Activated naive CD4-positive, alpha-beta T cell treated with anti-CD3 and anti-CD28 coated beads for 36 hours (primary cell): ENCODE measurements at regions of chr16 and their contacts with region 1.

Region 1: DNA sequence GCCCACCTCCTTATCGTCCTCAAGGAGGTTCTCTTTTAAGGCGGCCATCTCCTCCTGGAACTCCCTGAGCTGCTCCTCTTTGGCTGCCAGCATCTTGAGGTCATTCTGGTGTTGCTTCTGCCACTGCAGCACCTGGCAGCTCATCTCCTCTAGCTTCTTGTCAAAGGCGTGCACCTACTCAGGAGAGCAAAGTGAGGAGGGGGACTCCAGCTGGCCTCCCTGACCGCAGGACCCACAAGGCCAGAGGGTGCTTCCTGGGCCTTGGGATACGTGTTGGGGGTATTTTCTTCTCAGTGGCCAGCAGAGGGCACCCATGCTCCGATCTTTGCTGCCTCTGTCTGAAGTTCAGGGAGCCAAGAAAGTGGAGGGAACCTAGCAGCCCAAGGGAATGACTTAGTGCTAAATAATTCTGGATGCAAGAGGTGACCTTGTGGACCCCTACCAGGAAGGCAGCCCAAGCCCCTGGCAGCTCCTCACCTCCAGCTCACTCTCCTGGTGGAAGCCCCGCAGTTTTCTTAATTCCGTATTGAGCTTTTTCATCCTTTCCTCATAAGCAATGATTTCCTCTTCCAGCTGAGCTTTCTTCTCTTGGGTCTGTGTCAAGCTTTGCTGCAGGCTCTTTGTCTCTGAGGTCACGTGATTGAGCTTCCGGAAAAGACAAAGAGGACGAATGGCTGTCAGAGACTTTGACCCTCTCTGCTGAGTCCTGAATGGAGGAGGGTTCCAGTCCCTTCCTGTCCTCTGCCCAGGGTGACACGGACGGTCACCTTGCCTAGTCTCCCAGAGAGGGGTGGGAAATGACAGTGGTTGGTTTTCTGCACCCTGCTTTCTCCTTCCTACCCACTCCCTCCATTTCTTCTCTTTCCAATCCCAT is 31.4 kb downstream of the DHX38 start:
- DNase-seq: peak; percentile 80
- H3K4me3 Mint-ChIP-seq: no peak overlapping the region
- H3K27ac Mint-ChIP-seq: no peak overlapping the region
- H3K4me1 Mint-ChIP-seq: no peaks in the 10 kb centered on the region
- H3K27me3 Mint-ChIP-seq: no peaks in the 10 kb centered on the region

Region 2: GRCh38 chr16:72112906-72113615 is 11.9 kb before region 1 on chr16:
- CTCF ChIA-PET with region 1: interaction called, 10 read pairs
- intact Hi-C with region 1: no loop called
- DNase-seq: no peak
- H3K4me3 Mint-ChIP-seq: no peak overlapping the region
- H3K27ac Mint-ChIP-seq: no peak overlapping the region
- H3K4me1 Mint-ChIP-seq: no peaks in the 10 kb centered on the region
- H3K27me3 Mint-ChIP-seq: no peaks in the 10 kb centered on the region

Region 3: GRCh38 chr16:72400257-72400882 is 275.4 kb after region 1 on chr16:
- CTCF ChIA-PET with region 1: no interaction called
- intact Hi-C with region 1: loop called (anchors 10 kb)
- DNase-seq: peak; percentile 41
- H3K4me3 Mint-ChIP-seq: no peak overlapping the region
- H3K27ac Mint-ChIP-seq: no peak overlapping the region
- H3K4me1 Mint-ChIP-seq: no peaks in the 10 kb centered on the region
- H3K27me3 Mint-ChIP-seq: no peaks in the 10 kb centered on the region

Region 4: GRCh38 chr16:72832621-72833248 is 707.7 kb after region 1 on chr16:
- CTCF ChIA-PET with region 1: no interaction called
- intact Hi-C with region 1: loop called (anchors 10 kb)
- DNase-seq: peak; percentile 78
- H3K4me3 Mint-ChIP-seq: no peak overlapping the region
- H3K27ac Mint-ChIP-seq: no peak overlapping the region
- H3K4me1 Mint-ChIP-seq: no peaks in the 10 kb centered on the region
- H3K27me3 Mint-ChIP-seq: no peaks in the 10 kb centered on the region

Region 5: DNA sequence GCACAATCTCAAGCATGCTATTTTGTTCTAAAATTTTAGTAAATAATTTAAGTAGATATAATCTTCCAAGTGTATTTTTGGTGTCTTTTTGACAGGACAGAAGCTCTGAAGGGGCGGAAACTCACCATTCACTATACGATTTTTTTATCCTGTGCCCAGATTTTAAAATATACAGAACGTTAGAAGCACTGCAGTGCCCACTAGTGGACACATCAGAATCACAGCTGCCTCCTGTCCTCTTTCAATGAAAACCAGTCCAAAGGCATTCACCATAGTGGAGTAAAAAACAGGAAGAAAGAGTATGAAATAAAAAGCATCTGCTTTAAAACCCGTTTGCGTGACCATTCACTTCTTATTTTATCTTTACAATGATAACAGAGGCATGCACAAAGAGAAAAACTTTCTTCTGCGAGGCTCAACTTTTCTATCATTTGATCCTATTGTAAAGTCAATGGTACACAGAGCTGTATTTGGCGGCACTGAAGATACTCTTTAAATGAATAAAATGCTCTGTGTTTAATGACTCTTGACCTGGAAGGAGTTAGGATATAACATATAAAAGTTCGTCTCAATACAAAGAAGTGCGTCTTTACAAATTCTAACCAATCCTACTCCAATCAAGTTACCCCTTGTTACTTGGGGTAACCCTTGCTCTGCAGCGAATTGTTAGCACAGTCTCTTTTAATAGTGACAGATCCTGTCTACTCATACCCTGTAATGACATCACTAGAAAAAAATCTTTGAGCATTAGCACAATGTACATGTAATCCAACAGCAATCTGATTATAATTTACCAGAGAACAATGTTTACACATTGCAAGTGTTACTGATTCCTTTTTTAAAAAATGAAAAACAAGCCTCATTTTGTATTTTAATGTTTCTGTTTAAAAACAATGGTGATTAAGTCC is 1831.8 kb after region 1 on chr16:
- CTCF ChIA-PET with region 1: interaction called, 4 read pairs
- intact Hi-C with region 1: loop called (anchors 2 kb)
- DNase-seq: peak; percentile 65
- H3K4me3 Mint-ChIP-seq: no peak overlapping the region
- H3K27ac Mint-ChIP-seq: no peak overlapping the region
- H3K4me1 Mint-ChIP-seq: no peaks in the 10 kb centered on the region
- H3K27me3 Mint-ChIP-seq: peaks cover 2% of the 10 kb centered on the region